Mammary epithelial cell (primary cell): ENCODE measurements at regions of chr12 and their contacts with region 1.

Region 1: GRCh38 chr12:88052686-88053085 is 23.5 kb upstream of the C12orf50 start:
- DNase-seq: peak; percentile 25
- H3K4me3 ChIP-seq: no peak overlapping the region
- H3K27ac ChIP-seq: no peak overlapping the region
- H3K4me1 ChIP-seq: no peaks in the 10 kb centered on the region
- H3K27me3 ChIP-seq: no peaks in the 10 kb centered on the region
- CTCF ChIP-seq: peak; percentile 30 to 70

Region 2: GRCh38 chr12:87953256-87953860 is 99.3 kb before region 1 on chr12:
- CTCF ChIA-PET with region 1: interaction called, 3 read pairs
- dilution Hi-C with region 1: no loop called
- in situ Hi-C with region 1: no loop called
- intact Hi-C with region 1: loop called (anchors 1 kb)
- DNase-seq: peak; percentile 21
- H3K4me3 ChIP-seq: no peak overlapping the region
- H3K27ac ChIP-seq: no peak overlapping the region
- H3K4me1 ChIP-seq: no peaks in the 10 kb centered on the region
- H3K27me3 ChIP-seq: peaks cover 5% of the 10 kb centered on the region
- CTCF ChIP-seq: peak; percentile 52 to 63